ENCODE measurements at regions of chr1 and their contacts with region 1.

Region 1: DNA sequence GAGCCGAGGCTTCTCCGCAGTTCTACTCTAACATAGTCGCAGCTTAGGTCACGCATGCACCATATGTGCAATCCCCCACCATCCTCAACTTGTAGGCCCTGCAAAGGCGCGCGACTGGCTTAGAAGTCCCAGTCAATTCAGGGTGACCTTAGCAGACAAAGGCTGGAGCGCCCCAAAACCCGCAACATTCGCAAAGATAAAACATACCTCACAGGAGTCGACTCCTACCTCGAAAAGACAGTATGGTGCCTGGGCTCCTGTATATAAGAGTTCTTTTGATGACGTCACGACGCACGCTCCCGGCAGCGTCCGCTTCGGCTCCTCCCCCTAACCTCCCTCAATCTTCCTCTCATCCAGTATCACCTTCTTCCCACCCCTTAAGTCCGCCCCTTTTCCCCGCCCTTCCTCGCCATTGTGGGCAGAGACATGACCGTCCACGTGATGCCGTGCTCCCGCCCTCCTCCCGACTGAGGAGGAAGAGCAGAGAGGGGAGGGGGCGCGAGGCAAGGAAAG is at the start of gene GAS5:
- DNase-seq: peak; percentile 99 to 100
- H3K4me3 ChIP-seq: peak within 1 kb of the TSS; percentile 80 to 81
- H3K27ac ChIP-seq: peak within 1 kb of the TSS; percentile 94 to 95
- H3K4me1 ChIP-seq: peaks cover 0 to 33% (median 9%) of the 10 kb centered on the region in 4 donors
- H3K27me3 ChIP-seq: no peaks in the 10 kb centered on the region
- CTCF ChIP-seq: no peak

Region 2: DNA sequence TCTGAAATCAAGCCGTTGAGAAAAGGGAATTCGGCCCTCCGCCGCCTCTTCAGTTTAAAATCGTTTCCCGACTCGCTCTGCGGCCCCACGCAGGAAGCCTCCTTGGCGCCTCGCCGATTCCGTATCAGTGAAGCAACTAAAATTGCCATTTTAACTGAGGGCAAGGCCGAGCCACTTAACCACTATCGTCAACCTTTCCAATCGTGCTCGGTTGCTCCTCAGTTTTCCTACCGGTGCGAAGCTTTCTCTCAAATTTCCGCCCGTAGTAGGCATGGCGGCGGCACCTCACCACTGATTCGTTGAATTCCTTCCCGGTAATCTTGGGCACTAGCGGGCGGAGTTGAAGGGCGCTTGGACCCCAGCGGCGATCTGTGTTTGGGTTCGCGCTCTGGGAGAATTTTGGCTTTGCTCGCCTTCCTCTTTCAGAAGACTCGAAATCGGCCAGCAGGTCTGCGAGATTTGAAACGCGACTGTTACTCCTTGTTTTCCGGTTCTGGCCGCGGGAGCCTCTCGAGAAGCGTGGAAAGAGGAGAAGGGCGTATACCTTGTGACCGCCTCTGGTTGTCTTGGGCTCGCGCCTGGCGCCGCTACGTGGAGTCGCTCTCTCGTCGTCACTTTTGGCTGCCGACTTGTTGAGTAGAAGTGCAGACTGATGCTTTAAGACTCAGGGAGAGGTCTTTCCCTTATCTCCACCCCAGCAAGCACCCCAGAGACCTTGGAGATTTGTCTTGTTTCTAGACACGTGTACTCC is 43.3 kb before region 1 on chr1 and contains the starts of genes CENPL and DARS2:
- intact Hi-C with region 1: loop called (anchors 5 kb)
- DNase-seq: peak; percentile 97 to 98
- H3K4me3 ChIP-seq: peak within 1 kb of the TSS; percentile 66 to 74
- H3K27ac ChIP-seq: peak within 1 kb of the TSS; percentile 86 to 95
- H3K4me1 ChIP-seq: peaks cover 0 to 27% (median 9%) of the 10 kb centered on the region in 4 donors
- H3K27me3 ChIP-seq: no peaks in the 10 kb centered on the region
- CTCF ChIP-seq: no peak

Region 3: DNA sequence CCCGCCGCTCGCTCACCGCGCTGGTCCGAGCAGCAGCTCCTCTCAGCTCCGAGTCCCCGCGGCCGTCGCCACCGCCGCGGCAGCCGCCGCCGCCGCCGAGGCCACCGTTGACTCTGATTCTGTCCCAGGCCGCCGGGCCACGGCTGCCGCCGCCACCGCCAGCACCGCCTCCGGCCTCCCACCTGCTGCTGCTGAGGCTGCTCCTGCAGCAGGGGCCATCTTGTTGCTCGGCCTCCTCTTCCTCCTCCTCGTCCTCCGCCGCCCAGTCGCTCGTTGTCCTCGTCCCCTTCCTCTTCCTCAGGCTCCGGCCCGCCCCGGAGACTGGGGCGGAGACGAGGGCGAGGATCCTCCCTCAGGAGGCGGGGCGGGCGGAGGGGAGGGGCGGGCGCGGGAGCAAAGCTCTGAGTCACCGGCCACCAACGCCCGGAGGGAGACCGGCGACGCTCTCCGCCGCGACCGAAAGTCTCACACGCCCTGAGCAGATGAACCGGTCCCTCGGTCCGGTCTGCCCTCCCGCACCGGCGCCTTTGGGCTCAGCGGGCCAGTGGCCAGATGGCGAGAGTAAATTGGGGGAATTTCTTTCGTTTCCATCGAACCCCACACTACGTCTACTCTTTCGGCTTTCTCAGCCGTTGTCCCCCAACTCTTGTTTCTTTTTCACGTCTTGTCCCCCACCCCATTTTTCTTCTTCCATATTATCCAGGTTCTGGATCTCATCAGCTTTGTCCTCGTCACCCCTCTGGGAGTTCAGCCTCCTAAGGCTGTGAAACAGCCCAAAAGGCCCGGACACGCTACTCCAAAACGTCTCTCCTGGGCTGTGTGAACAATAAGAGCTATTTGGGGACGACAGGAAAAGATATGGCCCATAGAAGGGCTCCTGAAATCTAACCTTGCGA is 154.5 kb after region 1 on chr1 and contains the start of gene RC3H1:
- intact Hi-C with region 1: loop called (anchors 10 kb)
- DNase-seq: peak; percentile 89 to 94
- H3K4me3 ChIP-seq: peak within 1 kb of the TSS; percentile 79 to 86
- H3K27ac ChIP-seq: peak within 1 kb of the TSS; percentile 87 to 91
- H3K4me1 ChIP-seq: peaks cover 0 to 46% (median 20%) of the 10 kb centered on the region in 4 donors
- H3K27me3 ChIP-seq: no peaks in the 10 kb centered on the region
- CTCF ChIP-seq: no peak

Measured in tibial artery (tissue), 4 donors.